ENCODE measurements at regions of chr1 and their contacts with region 1.

Region 1: DNA sequence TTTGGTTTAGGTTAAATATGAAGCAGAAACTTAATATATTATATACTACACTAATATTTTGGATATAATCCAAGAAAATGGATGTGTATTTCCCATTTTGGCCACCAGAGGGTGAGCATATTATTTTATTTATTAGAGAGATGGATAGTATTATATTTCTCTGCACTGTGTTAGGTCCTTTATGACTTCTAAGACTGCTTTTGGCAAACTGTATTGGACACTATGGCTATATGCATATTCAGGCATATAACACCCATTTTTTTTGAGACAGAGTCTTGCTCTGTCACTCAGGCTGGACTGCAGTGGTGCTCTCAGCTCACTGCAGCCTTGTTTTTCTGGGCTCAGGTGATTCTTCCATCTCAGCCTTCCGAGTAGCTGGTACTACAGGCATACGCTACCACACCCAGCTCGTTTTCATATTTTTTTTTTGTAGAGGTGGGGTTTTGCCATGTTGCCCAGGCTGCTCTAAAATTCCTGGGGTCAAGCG is 17.8 kb upstream of the PGM1 start:
- DNase-seq: no peak
- H3K4me3 ChIP-seq: no peak overlapping the region
- CTCF ChIP-seq: peak; percentile 8

Region 2: GRCh38 chr1:63557365-63557987 is 17.9 kb before region 1 on chr1:
- CTCF ChIA-PET with region 1: interaction called, 134 read pairs
- POLR2A ChIA-PET with region 1: no interaction called
- DNase-seq: no peak
- H3K4me3 ChIP-seq: no peak overlapping the region
- CTCF ChIP-seq: peak; percentile 50

Region 3: GRCh38 chr1:63590166-63590560 is 14.8 kb after region 1 on chr1:
- CTCF ChIA-PET with region 1: interaction called, 10 read pairs
- POLR2A ChIA-PET with region 1: no interaction called
- DNase-seq: no peak
- H3K4me3 ChIP-seq: no peak overlapping the region
- CTCF ChIP-seq: no peak

Measured in AG04449 (cell line).